Brain microvascular endothelial cell (primary cell): ENCODE measurements at regions of chr4 and their contacts with region 1.

Region 1: DNA sequence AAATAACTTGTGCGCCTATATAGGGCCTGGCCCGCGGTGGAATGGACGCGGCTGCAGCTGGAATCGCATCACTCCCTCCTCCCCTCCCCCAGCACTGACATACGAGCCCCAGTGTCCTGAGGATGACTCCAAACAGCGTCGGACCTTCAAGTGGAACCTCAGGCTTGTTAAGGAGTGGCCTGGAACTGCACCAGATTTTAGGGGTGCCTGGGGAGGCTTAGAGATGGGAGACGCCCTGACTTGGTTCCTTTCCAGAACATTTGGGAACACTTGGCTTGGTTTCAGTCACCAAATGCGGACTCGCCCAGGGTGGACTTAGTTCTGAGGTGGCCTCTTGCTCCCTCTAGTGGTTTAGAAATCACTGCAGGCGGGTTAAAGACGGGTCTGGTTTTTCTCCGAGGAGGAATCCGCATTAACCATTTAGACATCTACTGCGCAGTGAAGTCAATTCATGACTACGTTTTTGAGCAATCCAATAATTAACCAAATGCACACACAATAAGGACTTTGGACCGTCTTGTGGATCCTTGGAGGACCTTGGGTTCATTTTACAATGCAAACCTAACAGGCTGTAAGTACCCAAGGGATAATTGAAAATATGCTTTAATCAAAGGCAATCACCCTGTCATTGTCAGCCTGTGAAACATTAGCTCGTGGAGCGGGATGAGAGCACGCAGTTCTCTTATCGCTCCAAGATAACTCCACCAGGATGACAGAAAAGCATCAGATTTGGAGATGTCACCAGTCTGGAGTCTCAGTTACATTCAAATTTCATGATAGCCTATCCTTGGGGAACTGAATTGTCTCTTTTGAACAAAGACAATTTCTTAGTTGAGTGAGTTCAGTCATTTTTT is 11.2 kb upstream of the PDGFRA start:
- DNase-seq: peak; percentile 80
- H3K4me3 ChIP-seq: peak overlapping the region; percentile 58
- H3K27ac ChIP-seq: peak overlapping the region; percentile 42
- H3K27me3 ChIP-seq: no peaks in the 10 kb centered on the region
- CTCF ChIP-seq: peak; percentile 92

Region 2: GRCh38 chr4:53702334-53703266 is 515.3 kb before region 1 on chr4:
- in situ Hi-C with region 1: loop called (anchors 25 kb)
- DNase-seq: peak; percentile 77
- H3K4me3 ChIP-seq: peak overlapping the region; percentile 33
- H3K27ac ChIP-seq: peak overlapping the region; percentile 52
- H3K27me3 ChIP-seq: no peaks in the 10 kb centered on the region
- CTCF ChIP-seq: peak; percentile 51

Region 3: GRCh38 chr4:53908661-53909078 is 309.2 kb before region 1 on chr4:
- in situ Hi-C with region 1: loop called (anchors 25 kb)
- DNase-seq: peak; percentile 89
- H3K4me3 ChIP-seq: peak overlapping the region; percentile 32
- H3K27ac ChIP-seq: peak overlapping the region; percentile 24
- H3K27me3 ChIP-seq: no peaks in the 10 kb centered on the region
- CTCF ChIP-seq: peak; percentile 87

Region 4: GRCh38 chr4:55561889-55562288 is 1344.0 kb after region 1 on chr4:
- in situ Hi-C with region 1: no loop called
- DNase-seq: no peak
- H3K4me3 ChIP-seq: no peak overlapping the region
- H3K27ac ChIP-seq: no peak overlapping the region
- H3K27me3 ChIP-seq: no peaks in the 10 kb centered on the region
- CTCF ChIP-seq: no peak